ENCODE measurements at regions of chr1 and their contacts with region 1.

Region 1: GRCh38 chr1:223831755-223832636 is 13.8 kb downstream of the TP53BP2 start:
- DNase-seq: no peak
- H3K4me3 Mint-ChIP-seq: peak overlapping the region; percentile 23
- H3K27ac Mint-ChIP-seq: peak overlapping the region; percentile 90
- H3K4me1 Mint-ChIP-seq: peaks cover 10% of the 10 kb centered on the region
- H3K27me3 Mint-ChIP-seq: no peaks in the 10 kb centered on the region

Region 2: GRCh38 chr1:222654849-222655248 is 1177.1 kb before region 1 on chr1:
- intact Hi-C with region 1: loop called (anchors 10 kb)
- DNase-seq: peak; percentile 73
- H3K4me3 Mint-ChIP-seq: peak overlapping the region; percentile 5
- H3K27ac Mint-ChIP-seq: peak overlapping the region; percentile 61
- H3K4me1 Mint-ChIP-seq: peaks cover 59% of the 10 kb centered on the region
- H3K27me3 Mint-ChIP-seq: no peaks in the 10 kb centered on the region

Region 3: DNA sequence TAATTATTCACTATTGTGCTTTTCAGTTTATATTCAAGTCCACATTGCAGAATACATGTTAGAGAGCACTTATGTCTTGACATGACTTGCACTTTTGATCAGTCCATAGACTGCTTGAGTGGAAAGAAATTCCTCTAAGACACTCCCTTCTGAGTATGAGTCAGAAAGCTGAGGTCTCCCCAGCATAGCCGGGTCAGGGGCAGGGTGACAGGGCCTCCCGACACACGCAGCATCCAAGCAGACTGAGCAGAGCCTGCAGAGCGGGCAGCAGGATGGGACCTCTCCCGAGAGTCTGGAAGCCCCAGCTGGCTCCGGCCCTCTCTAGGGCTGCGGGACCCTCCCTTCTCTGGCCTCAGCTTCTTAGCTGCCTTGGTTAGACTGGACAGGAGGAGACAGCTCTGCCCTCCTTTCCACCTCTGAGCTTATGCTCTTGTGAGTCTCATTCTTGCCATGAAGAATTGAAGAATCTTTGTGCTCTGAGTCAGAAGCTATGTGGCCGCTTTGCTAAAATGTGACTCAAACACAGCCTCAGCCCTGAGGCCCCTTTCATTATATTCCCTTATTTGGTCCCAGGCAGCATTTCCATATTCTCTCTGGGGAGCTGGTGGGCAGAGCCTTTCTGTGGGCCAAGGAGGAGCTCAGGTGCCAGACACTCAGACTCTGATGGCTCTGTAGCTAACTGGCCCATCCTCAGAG is 130.9 kb before region 1 on chr1:
- intact Hi-C with region 1: loop called (anchors 1 kb)
- DNase-seq: no peak
- H3K4me3 Mint-ChIP-seq: no peak overlapping the region
- H3K27ac Mint-ChIP-seq: peak overlapping the region; percentile 83
- H3K4me1 Mint-ChIP-seq: peaks cover 54% of the 10 kb centered on the region
- H3K27me3 Mint-ChIP-seq: peaks cover 4% of the 10 kb centered on the region

Region 4: DNA sequence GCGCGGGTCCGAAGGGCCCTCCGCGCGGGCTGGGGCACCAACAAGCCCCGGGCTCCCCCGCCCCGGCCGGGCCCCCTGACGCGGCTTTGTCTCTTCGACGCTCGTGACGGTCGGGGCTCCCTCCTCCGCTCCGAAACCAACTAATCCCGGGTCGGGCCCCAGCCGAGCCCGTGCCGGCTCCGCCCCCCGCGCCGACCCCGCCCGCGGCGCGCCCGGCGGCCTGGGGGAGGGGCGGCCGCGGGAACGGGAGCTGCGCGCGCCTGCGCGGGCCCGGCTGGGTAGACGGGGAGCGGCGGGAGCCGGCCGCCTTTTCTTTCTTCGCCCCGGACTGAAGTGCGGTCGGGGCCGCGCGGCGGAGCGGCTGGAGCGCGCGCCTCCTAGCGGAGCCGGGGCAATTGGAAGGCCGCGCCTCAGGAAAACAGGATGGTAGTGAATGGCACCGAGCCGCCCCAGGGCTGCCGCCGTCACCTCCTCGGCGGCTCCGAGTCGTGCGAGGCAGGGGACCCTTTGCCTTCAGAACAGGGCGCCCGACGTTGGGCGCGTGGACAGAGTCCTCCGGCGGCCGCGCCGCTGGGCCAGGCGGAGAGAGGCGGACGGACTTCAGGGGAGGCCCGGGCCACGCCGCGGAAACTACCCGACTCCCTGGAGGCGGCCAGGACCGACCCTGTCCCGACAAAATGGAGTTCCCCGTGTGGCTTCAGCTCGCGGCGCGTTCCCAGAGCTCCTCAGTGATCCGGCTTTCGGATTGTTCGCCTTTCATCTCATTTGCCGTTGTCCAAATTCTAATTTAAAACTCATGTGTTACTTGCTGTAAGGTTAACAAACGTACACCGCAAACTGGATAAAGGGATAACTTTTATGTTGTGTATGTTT is 14.1 kb after region 1 on chr1 and contains the start of gene TP53BP2:
- intact Hi-C with region 1: loop called (anchors 1 kb)
- DNase-seq: peak; percentile 81
- H3K4me3 Mint-ChIP-seq: peak within 1 kb of the TSS; percentile 95
- H3K27ac Mint-ChIP-seq: peak within 1 kb of the TSS; percentile 96
- H3K4me1 Mint-ChIP-seq: peaks cover 42% of the 10 kb centered on the region
- H3K27me3 Mint-ChIP-seq: peaks cover 5% of the 10 kb centered on the region
- total RNA-seq, gene TP53BP2: 40.4 and 47.2 TPM in 2 replicates

Region 5: GRCh38 chr1:224042557-224043118 is 210.6 kb after region 1 on chr1:
- intact Hi-C with region 1: no loop called
- DNase-seq: no peak
- H3K4me3 Mint-ChIP-seq: no peak overlapping the region
- H3K27ac Mint-ChIP-seq: no peak overlapping the region
- H3K4me1 Mint-ChIP-seq: peaks cover 5% of the 10 kb centered on the region
- H3K27me3 Mint-ChIP-seq: peaks cover 2% of the 10 kb centered on the region

Region 6: GRCh38 chr1:224168859-224169380 is 336.9 kb after region 1 on chr1:
- intact Hi-C with region 1: loop called (anchors 1 kb)
- DNase-seq: peak; percentile 59
- H3K4me3 Mint-ChIP-seq: peak overlapping the region; percentile 60
- H3K27ac Mint-ChIP-seq: peak overlapping the region; percentile 76
- H3K4me1 Mint-ChIP-seq: peaks cover 38% of the 10 kb centered on the region
- H3K27me3 Mint-ChIP-seq: peaks cover 2% of the 10 kb centered on the region

Region 7: GRCh38 chr1:224356685-224357625 is 525.0 kb after region 1 on chr1 and contains the start of gene CNIH4:
- intact Hi-C with region 1: loop called (anchors 1 kb)
- DNase-seq: peak; percentile 89
- H3K4me3 Mint-ChIP-seq: peak within 1 kb of the TSS; percentile 93
- H3K27ac Mint-ChIP-seq: peak within 1 kb of the TSS; percentile 93
- H3K4me1 Mint-ChIP-seq: peaks cover 28% of the 10 kb centered on the region
- H3K27me3 Mint-ChIP-seq: no peaks in the 10 kb centered on the region
- total RNA-seq, gene CNIH4: 80.7 and 82.3 TPM in 2 replicates

Region 8: GRCh38 chr1:224377676-224378006 is 545.6 kb after region 1 on chr1:
- intact Hi-C with region 1: no loop called
- DNase-seq: no peak
- H3K4me3 Mint-ChIP-seq: peak overlapping the region; percentile 66
- H3K27ac Mint-ChIP-seq: peak overlapping the region; percentile 94
- H3K4me1 Mint-ChIP-seq: peaks cover 91% of the 10 kb centered on the region
- H3K27me3 Mint-ChIP-seq: no peaks in the 10 kb centered on the region

Region 9: DNA sequence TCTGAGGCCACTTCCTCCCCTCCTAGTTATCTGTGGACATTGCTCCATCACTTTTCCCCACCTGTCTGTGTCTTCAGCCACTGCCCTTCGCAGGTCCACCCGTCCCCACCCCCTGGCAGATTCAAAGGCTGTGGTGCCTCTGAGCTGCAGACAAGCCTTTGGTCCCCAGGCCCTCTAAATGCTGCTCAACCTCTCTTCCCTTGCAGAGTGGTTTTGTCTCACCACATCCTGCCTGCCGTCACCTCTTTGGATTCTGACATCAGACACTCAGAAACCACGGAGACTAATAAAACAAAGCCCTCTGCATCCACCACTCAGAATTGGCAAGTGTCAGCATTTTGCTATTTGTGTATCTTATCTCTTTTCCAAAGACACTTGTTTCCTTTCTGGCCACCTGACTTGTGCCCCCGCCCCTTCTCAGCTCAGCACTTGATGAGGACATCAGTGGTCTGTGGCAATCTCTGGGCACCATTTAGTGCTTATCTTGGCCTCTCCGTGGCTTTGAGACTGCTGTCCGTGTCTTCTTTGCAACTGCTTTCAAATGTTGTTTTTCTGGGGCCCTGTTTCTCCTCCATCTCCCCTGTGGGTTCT is 791.8 kb after region 1 on chr1:
- intact Hi-C with region 1: loop called (anchors 10 kb)
- DNase-seq: peak; percentile 83
- H3K4me3 Mint-ChIP-seq: peak overlapping the region; percentile 70
- H3K27ac Mint-ChIP-seq: peak overlapping the region; percentile 94
- H3K4me1 Mint-ChIP-seq: peaks cover 48% of the 10 kb centered on the region
- H3K27me3 Mint-ChIP-seq: peaks cover 39% of the 10 kb centered on the region

Measured in activated T-helper 1 cell treated with anti-CD3 and anti-CD28 coated beads, Interleukin-12 subunit alpha, Interleukin-12 subunit beta, Interleukin-2, Interleukin-4 antibody, amounts not matched to agents 30 ng/mL and 10 ng/mL and 1 ng/mL, durations not matched to agents 14 hours and 24 hours and 36 hours (primary cell).